ENCODE measurements at regions of chr2 and their contacts with region 1.

Region 1: DNA sequence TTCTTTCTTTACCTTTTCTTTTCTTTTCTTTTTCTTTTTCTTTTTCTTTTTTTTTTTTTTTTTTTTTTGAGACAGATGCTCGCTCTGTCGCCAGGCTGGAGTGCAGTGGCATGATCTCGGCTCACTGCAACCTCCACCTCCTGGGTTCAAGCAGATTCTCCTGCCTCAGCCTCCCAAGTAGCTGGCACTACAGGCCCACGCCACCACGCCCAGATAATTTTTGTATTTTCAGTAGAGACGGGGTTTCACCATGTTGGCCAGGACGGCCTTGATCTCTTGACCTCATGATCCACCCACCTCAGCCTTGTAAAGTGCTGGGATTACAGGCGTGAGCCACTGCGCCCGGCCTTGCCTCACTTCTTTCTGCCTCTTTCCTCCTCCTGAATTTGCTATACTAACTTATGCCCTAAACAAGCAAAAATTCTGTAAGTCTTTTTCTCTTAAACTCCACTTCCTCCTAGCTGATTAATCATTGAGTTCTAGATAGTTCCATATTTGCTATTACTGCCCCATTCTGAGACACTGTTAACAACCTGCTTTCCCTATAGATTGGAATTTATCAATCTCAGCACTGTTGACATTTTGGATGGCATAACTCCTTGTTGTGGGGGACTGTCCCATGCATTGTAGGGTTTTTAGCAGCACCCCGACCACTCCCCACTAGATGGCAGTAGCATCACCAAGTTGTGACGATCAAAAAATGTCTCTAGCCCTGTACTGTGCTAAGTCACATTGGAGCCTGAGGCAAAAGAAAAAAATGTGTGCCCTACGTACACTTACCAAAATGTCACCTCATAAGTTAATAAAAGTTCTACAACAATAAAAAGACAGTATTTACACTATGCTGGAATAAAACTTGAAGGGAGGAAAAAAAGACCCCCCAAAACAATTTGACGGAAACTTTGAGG is 16.4 kb upstream of the THADA start:
- DNase-seq: no peak

Region 2: GRCh38 chr2:43461453-43462073 is 150.7 kb before region 1 on chr2:
- intact Hi-C with region 1: no loop called
- DNase-seq: no peak

Region 3: DNA sequence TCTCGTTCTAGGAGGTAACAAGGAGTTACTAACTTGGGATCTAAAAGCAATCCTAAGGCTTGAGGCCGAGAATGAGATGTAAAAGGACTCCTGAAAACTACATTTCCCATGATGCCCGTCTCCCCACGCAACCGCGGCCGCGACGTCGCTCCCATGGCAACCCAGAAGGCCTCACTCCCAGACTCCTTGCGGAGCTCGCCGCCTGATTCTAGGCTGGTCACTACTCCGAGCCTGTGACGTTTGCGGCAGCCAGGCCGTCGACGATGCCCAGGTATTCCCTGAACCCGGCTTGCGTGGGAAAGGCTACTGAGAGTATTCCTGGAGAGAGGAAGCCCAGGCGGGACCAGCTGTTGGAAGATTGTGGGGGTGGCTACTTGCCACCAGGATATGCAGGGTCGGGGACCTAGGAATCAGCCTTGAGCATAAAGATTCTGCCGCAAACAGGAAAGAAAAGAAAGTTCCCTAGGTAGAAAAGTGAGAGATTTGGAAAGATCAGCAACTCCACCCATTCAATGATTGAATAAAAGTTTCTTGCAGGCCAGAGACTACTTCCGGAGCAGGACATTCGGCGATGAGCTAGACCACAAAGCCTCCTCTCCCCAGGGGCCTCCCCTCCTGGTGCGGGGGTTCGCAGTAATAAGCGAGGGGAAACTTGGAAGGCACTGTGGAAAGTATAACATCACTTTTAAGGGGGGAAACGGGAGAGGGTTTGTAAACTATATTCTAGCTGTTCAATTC is 161.8 kb after region 1 on chr2 and contains the start of gene DYNC2LI1:
- intact Hi-C with region 1: loop called (anchors 5 kb)
- DNase-seq: peak; percentile 95
- total RNA-seq, gene DYNC2LI1: 7.9 TPM

Region 4: DNA sequence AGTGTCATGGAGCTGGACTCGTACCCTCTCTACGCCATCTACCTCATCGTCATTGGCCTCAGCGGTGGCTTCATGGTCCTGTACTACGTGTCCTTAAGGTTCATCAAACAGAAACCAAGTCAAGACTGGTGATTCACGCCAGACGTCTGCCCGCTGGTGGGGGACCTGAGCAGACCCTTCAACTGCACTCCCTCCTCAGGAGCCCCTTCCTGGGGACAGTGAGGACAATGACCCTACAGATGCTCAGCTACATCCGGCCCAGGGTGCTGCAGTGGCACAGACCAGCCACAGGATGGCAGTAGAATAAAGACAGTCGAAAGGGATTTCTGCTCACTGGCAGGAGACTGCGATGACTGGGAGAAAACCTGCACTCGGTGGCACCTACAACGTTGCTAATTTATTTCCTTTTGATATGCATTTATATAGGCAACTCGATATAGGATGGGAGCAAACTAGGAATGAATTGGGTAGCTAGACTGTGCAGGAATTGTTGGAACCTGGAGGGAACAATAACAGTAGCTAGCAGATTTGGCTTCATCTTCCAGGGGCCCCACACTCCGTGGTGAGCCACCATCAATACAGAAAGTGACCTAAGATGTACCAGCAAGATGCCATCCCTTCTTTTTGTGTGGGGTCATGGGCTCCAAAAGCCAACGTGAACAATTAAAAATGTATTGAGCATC is 265.7 kb after region 1 on chr2:
- intact Hi-C with region 1: loop called (anchors 10 kb)
- DNase-seq: no peak

Measured in cardiac septum (tissue), 1 donor.